H1 (cell line): ENCODE measurements at regions of chr1 and their contacts with region 1.

Region 1: DNA sequence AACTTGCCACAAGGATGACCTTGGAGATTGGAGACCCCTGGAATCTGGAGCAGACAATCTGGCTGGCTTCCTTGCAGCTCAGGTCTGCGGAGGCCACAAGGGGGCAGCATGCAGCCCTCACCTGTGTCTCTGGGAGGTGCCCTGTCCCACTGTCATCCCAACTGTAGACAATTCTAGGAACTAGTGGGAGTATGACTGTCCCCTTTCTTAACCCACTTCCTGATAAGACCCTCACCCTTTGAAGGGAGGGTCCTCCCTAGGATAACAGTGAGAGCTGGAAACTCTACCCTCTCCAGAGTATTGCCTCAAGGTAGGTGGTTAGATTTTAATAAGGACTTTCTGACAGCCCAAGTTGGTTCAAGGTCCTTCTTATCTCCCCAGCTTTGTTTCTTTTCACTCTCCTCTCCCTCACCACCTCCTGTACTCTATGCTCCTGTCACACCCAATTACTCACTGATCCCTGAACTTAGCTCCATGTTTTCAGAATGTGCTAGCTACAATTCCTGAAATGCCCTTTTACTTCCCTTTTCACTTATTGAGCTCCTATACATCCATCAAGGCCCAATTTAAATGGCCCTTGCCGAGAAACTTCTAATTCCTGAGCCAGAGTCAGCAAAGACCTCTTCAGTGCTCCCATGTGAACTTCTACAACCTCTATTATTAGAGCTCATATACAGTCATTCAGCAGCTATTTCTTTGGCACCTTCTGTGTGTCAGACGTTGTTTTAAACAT is 9.2 kb upstream of the KCNQ4 start:
- DNase-seq: peak; percentile 54 to 88
- H3K4me3 ChIP-seq: no peak overlapping the region
- H3K27ac ChIP-seq: no peak overlapping the region
- H3K4me1 ChIP-seq: peaks cover 4 to 30% (median 12%) of the 10 kb centered on the region in 4 experiments
- H3K27me3 ChIP-seq: no peaks in the 10 kb centered on the region
- CTCF ChIP-seq: peak; percentile 90 to 94 (median 94)
- EP300 ChIP-seq: no peak
- POLR2A ChIP-seq: no peak
- RAD21 ChIP-seq: peak; percentile 70 to 81

Region 2: GRCh38 chr1:40691538-40692428 is 82.6 kb before region 1 on chr1 and contains the start of gene NFYC:
- CTCF ChIA-PET with region 1: interaction called, 9 read pairs
- POLR2A ChIA-PET with region 1: interaction called, 22 read pairs
- DNase-seq: peak; percentile 97
- H3K4me3 ChIP-seq: peak within 1 kb of the TSS; percentile 67 to 82 (median 80)
- H3K27ac ChIP-seq: peak within 1 kb of the TSS; percentile 100
- H3K4me1 ChIP-seq: peaks cover 0 to 9% (median 7%) of the 10 kb centered on the region in 4 experiments; a peak in 6 of 7 replicates
- H3K27me3 ChIP-seq: no peaks in the 10 kb centered on the region
- CTCF ChIP-seq: no peak
- EP300 ChIP-seq: peak in 1 of 2 experiments; percentile 3; a peak in 1 of 3 replicates
- POLR2A ChIP-seq: peak; percentile 93 to 96
- RAD21 ChIP-seq: 0 out of 4 replicates have a peak, but pooled peaks of 1 of the 2 experiments have one; percentile 1
- total RNA-seq, gene NFYC: 51.1 and 54.1 TPM in 2 replicates

Region 3: DNA sequence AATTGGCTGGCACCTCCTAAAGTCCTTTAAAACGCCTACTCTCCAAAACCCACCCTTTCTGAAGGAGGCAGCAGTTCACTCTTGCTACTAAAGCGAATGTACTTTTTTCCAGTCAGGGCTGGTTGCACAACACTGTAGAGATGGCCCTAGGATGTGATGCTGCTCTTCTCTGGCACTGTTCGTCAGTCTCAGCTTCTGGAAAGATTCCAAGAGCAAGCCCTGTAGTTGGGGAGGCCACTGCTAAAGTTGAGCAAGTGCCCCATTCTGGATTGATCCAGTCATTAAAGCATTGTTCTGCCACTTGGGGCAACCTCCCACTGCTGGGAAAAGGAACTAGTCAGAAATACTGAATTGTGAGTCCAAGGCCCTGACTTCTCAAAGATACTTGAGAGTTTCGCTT is 19.4 kb before region 1 on chr1:
- CTCF ChIA-PET with region 1: interaction called, 140 read pairs
- POLR2A ChIA-PET with region 1: interaction called, 14 read pairs
- DNase-seq: no peak
- H3K4me3 ChIP-seq: no peak overlapping the region
- H3K27ac ChIP-seq: no peak overlapping the region
- H3K4me1 ChIP-seq: no peaks in the 10 kb centered on the region
- H3K27me3 ChIP-seq: no peaks in the 10 kb centered on the region
- CTCF ChIP-seq: no peak
- EP300 ChIP-seq: no peak
- POLR2A ChIP-seq: no peak
- RAD21 ChIP-seq: no peak

Region 4: DNA sequence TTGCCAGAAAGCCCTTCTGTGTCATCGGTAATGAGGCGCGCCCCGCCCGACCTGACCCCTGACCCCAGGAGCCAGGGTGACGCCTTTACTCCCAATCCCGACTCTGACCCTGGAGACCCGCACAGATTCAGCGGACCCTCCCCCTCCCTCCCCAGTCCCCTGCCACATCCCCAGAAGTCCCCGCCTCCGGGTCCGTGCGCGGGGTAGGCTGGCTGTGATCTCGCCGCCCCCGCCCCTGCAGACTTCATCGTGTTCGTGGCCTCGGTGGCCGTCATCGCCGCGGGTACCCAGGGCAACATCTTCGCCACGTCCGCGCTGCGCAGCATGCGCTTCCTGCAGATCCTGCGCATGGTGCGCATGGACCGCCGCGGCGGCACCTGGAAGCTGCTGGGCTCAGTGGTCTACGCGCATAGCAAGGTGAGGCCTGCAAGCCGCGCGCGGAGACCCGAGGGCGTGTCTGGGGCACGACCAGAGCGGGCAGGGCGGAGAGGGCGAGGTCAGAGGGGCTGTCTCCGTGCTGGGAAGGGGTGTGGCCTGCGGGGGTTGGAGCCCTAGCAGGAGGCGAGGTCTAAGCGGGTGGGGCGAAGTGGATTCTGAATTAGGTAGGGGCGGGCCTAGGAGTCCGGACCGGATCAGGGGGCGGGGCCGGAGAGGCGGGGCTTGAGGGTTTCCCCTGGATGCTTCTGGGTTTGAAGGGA is 44.0 kb after region 1 on chr1:
- CTCF ChIA-PET with region 1: interaction called, 36 read pairs
- POLR2A ChIA-PET with region 1: interaction called, 3 read pairs
- DNase-seq: peak; percentile 60 to 97
- H3K4me3 ChIP-seq: peak overlapping the region; percentile 58 to 76 (median 64)
- H3K27ac ChIP-seq: no peak overlapping the region
- H3K4me1 ChIP-seq: peaks cover 0 to 6% (median 4%) of the 10 kb centered on the region in 4 experiments; a peak in 4 of 7 replicates
- H3K27me3 ChIP-seq: peaks cover 0 to 5% (median 2%) of the 10 kb centered on the region in 4 experiments; a peak in 3 of 7 replicates
- CTCF ChIP-seq: no peak
- EP300 ChIP-seq: no peak
- POLR2A ChIP-seq: no peak
- RAD21 ChIP-seq: no peak

Region 5: DNA sequence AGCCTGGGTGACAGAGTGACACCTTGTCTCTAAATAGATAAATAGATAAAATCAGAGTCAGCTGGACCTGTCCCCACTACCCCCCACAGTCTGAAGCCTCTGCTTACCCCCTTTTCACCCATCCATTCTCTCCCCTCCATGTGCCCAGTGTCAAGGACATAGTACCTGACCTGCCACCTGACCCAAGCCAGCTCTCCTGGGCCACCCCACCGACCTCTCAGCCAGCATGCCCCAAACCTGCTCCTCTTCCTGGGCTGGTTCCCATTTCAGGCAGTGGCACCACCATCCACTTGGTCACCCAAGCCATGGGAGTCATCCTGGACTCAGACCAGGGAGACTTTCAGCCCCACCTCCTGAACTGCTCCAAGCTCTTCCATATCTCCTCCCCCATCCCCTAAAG is 59.5 kb after region 1 on chr1:
- CTCF ChIA-PET with region 1: interaction called, 31 read pairs
- POLR2A ChIA-PET with region 1: no interaction called
- DNase-seq: no peak
- H3K4me3 ChIP-seq: no peak overlapping the region
- H3K27ac ChIP-seq: no peak overlapping the region
- H3K4me1 ChIP-seq: no peaks in the 10 kb centered on the region; a peak in 1 of 7 replicates
- H3K27me3 ChIP-seq: no peaks in the 10 kb centered on the region
- CTCF ChIP-seq: no peak
- EP300 ChIP-seq: no peak
- POLR2A ChIP-seq: no peak
- RAD21 ChIP-seq: no peak

Region 6: DNA sequence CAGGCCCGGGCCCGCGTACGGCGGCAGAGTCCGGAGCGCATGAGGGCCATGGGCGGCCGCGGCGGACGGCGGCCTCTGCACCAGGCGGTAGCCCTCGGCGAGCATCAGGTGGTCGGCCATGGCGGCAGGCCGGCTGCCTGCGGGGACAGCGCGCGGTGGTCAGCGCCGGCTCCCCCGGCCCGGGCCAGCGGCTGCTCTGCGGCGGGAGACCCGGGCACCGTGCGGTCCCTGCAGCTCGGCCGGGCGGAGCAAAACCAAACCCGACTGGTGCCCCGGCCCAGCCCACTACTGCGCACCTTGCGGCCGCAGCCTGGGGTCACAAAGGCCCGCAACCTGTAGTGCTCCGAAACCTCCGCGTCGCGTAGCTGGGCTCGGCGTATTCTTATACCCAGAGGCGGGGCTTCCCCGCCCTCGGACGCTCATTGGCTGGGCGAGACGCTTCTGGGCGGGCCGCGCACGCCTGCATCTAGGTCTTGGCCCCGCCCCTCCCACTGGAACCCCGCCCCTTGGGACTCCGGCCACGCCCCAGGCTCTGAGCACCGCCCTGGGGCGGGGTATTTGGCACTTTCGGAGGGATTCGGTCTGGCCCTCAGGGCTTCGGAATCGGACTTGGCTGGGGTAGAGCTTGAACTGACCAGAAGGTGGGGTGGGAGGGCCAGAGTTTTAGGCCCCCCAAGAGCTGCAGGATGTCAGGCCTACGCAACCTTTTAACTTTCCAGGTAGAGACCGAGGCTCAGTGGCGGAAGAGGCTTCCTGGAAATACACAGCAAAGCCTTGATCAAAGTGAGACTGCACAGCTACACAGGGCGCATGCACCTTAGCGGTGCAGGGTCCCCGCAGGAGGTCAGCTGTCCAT is 87.8 kb after region 1 on chr1 and contains the start of gene CITED4:
- CTCF ChIA-PET with region 1: interaction called, 9 read pairs
- POLR2A ChIA-PET with region 1: interaction called, 12 read pairs
- DNase-seq: peak; percentile 92 to 97
- H3K4me3 ChIP-seq: peak within 1 kb of the TSS; percentile 39 to 64 (median 48)
- H3K27ac ChIP-seq: peak within 1 kb of the TSS; percentile 19; the same call in 1 of the 2 replicates
- H3K4me1 ChIP-seq: peaks cover 4 to 8% (median 6%) of the 10 kb centered on the region in 4 experiments
- H3K27me3 ChIP-seq: peaks cover 0 to 20% (median 16%) of the 10 kb centered on the region in 4 experiments; a peak in 5 of 7 replicates
- CTCF ChIP-seq: peak; percentile 46 to 64 (median 58)
- EP300 ChIP-seq: no peak
- POLR2A ChIP-seq: peak; percentile 97 to 98
- RAD21 ChIP-seq: peak; percentile 70 to 78
- total RNA-seq, gene CITED4: 16.0 and 16.3 TPM in 2 replicates